Heart right ventricle (tissue), 16 donors: ENCODE measurements at regions of chr7 and their contacts with region 1.

Region 1: DNA sequence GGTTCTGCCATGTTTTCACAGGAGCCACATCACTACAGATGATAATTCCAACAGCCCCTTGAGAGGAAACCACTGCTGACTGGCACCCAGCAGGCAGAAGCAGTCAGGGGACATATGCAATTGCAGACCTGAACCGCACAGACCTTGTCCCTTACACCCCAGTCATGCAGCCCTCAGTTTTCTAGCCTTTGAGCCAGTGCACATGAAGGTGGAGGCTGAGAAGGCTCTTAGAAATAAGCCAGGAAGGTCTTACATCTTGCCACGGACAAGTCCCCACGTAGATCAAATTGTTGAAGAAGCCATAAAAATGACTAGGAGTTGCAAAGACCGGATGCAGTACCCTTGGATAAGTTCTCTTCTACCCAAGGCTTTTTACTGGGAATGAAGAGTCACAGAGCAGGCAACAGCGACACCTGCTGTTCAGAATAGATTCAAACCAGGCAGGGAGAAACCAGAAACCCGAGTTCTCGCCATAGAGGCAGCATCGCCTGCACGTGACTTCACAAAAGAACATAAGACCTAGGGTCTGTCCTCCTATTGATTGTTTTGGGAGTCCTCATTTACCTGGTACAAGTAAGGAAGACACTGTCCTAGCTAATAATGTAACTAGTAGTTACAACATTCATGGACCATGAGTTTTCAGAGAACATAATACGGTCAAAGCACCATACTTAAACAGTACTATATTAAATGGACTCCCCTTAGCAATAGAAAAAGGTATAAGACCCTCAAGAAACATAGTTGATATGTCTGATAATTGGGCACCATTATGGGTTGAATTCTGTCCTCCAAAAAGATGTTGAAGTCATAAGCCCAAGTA is 11.1 kb downstream of the STEAP1B start:
- DNase-seq: peak in 1 of 2 donors; percentile 68
- ATAC-seq: peak; percentile 76 to 93 (median 83)
- H3K4me3 ChIP-seq: no peak overlapping the region
- H3K27ac ChIP-seq: no peak overlapping the region
- H3K4me1 ChIP-seq: peaks cover 0 to 11% (median 0%) of the 10 kb centered on the region in 9 donors
- H3K27me3 ChIP-seq: peaks cover 0 to 6% (median 0%) of the 10 kb centered on the region in 7 donors
- CTCF ChIP-seq: peak; percentile 77 to 97 (median 92)

Region 2: DNA sequence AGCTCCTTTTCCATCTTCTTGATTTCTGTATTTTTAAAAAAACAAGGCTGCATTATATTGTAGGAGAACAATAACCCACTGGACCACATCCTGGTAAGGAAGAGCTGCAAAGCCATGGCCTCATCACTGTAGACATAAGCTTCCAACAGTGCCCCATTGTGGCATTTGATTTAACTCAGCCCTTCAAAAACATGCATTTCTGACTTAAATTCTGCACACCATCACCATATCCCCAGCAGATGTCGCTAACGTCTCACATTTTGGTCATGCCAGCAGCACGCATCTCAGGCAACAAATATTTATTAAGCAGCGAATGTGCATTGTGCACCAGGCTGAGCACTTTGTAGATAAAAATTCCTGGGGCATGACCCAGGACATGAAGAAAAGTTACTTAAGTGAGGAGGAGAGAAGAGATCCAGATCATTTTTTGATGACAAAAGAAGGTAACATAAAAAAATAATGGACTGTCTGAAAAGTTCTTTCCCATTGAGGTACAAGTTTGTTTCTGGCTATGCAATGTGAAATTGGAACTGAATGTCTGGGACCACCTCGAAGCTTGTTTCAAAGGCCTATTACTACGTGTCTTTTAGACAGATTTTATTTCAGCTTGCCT is 378.5 kb before region 1 on chr7:
- intact Hi-C with region 1: loop called (anchors 1 to 2 kb)
- DNase-seq: peak in 1 of 2 donors; percentile 77
- ATAC-seq: peak; percentile 51 to 83 (median 74)
- H3K4me3 ChIP-seq: no peak overlapping the region
- H3K27ac ChIP-seq: peak overlapping the region in 2 of 10 donors; percentile 10 to 23
- H3K4me1 ChIP-seq: peaks cover 0 to 25% (median 8%) of the 10 kb centered on the region in 9 donors
- H3K27me3 ChIP-seq: peaks cover 0 to 7% (median 0%) of the 10 kb centered on the region in 7 donors
- CTCF ChIP-seq: peak; percentile 72 to 89 (median 81)

Region 3: GRCh38 chr7:22356701-22357353 is 132.0 kb before region 1 on chr7 and contains the start of gene RAPGEF5:
- intact Hi-C with region 1: loop called in 1 of 10 experiments (anchors 10 kb)
- DNase-seq: peak in 1 of 2 donors; percentile 14
- ATAC-seq: peak in 7 of 8 donors; percentile 17 to 58 (median 35)
- H3K4me3 ChIP-seq: peak within 1 kb of the TSS; percentile 21 to 63 (median 50)
- H3K27ac ChIP-seq: peak within 1 kb of the TSS in 6 of 10 donors; percentile 23 to 59 (median 32)
- H3K4me1 ChIP-seq: peaks cover 0 to 22% (median 8%) of the 10 kb centered on the region in 9 donors
- H3K27me3 ChIP-seq: peaks cover 0 to 41% (median 19%) of the 10 kb centered on the region in 7 donors
- CTCF ChIP-seq: peak in 2 of 9 donors; percentile 5 to 9
- total RNA-seq, gene RAPGEF5: 9.2 to 33.3 (median 15.3) TPM